A549 (cell line): ENCODE measurements at regions of chr7 and their contacts with region 1.

Region 1: DNA sequence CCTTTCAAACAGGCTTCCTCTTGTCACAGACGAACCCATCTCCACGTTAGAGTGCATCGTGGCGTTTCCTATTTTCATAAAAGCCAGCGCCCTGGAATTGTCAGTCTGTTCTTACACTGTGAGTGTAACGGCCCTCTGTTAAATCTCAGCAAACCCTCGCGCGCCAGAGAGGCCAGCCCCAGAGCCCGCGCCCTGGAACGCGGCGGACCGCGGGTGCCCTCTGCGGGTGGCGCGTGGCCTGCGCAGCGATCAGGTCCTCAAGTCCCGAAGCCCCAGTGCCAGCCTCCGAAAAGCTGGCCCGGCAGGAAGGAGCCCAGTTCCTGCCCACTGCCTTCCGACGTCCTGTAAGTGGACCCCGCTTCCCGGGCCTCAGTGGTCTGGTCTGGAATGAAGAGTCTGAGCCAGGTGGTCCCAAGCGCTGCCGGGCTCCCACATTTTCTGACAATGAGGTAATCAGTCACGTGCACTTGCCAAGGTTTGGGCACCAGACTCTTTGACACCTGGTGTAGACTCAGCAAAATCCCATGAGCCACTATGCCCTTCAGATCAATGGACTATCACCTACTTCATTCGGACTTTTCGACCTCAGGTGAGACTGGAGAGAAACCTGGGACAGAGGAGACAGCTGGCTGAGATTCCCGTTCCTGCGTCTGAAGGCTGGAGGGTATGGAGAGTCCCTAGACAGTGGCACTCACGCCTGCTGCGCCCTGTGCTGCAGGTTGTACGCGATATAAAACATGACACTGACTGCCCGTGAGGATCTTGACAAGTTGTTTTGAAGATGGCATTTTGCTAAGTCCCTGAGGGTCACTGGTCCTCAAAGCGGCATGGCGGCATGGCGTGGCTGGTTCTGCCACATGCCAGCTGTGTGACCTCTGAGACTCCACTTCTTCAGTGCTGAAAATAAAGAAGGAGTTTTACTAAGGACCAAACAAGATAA is 109.4 kb upstream of the LANCL2 start:
- DNase-seq: peak; percentile 71 to 85
- ATAC-seq: peak; percentile 89 to 91
- H3K4me3 ChIP-seq: peak overlapping the region; percentile 69
- H3K27ac ChIP-seq: peak overlapping the region; percentile 91 to 95
- H3K4me1 ChIP-seq: peaks cover 4% of the 10 kb centered on the region; the same call in 1 of the 3 replicates
- CTCF ChIP-seq: peak; percentile 82
- EP300 ChIP-seq: no peak
- POLR2A ChIP-seq: no peak
- RAD21 ChIP-seq: peak; percentile 91 to 94

Region 2: DNA sequence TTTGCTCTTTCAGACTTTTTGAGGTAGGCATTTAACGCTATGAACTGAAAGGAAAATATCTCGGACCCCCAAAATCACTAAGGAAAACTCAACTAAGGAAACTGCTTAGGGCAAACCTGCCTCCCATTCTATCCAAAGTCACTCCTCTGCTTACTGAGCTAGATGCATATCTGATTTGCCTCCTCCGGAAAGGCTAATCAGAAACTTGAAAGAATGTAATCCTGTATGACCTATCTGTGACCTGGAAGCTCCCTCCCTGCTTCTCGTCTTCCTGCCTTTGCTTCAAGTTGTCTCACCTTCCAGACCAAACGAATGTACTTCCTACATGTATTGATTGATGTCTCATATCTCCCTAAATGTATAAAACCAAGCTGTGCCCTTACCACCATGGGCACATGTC is 438.7 kb before region 1 on chr7:
- CTCF ChIA-PET with region 1: interaction called, 11 read pairs
- POLR2A ChIA-PET with region 1: no interaction called
- DNase-seq: no peak
- ATAC-seq: no peak
- H3K4me3 ChIP-seq: no peak overlapping the region
- H3K27ac ChIP-seq: peak overlapping the region in 1 of 2 experiments; percentile 17; a peak in 1 of 6 replicates
- H3K4me1 ChIP-seq: peaks cover 26% of the 10 kb centered on the region
- CTCF ChIP-seq: no peak
- EP300 ChIP-seq: no peak
- POLR2A ChIP-seq: no peak
- RAD21 ChIP-seq: no peak

Region 3: GRCh38 chr7:55026866-55027490 is 228.8 kb before region 1 on chr7:
- CTCF ChIA-PET with region 1: interaction called, 19 read pairs
- POLR2A ChIA-PET with region 1: no interaction called
- DNase-seq: no peak
- ATAC-seq: peak; percentile 28 to 44; a peak in 3 of 6 replicates
- H3K4me3 ChIP-seq: no peak overlapping the region
- H3K27ac ChIP-seq: peak overlapping the region; percentile 29 to 72; a peak in 4 of 6 replicates
- H3K4me1 ChIP-seq: peaks cover 100% of the 10 kb centered on the region
- CTCF ChIP-seq: no peak
- EP300 ChIP-seq: no peak
- POLR2A ChIP-seq: no peak
- RAD21 ChIP-seq: no peak

Region 4: GRCh38 chr7:55132890-55133551 is 122.7 kb before region 1 on chr7:
- CTCF ChIA-PET with region 1: interaction called, 20 read pairs
- POLR2A ChIA-PET with region 1: no interaction called
- DNase-seq: peak; percentile 88 to 91
- ATAC-seq: peak; percentile 83
- H3K4me3 ChIP-seq: peak overlapping the region; percentile 7; the same call in 1 of the 3 replicates
- H3K27ac ChIP-seq: peak overlapping the region; percentile 93 to 98
- H3K4me1 ChIP-seq: peaks cover 71% of the 10 kb centered on the region
- CTCF ChIP-seq: no peak
- EP300 ChIP-seq: peak; percentile 64 to 67; a peak in 2 of 5 replicates
- POLR2A ChIP-seq: no peak
- RAD21 ChIP-seq: peak; percentile 25 to 38; a peak in 4 of 5 replicates

Region 5: GRCh38 chr7:55192718-55193117 is 63.0 kb before region 1 on chr7:
- CTCF ChIA-PET with region 1: interaction called, 44 read pairs
- POLR2A ChIA-PET with region 1: no interaction called
- DNase-seq: no peak
- ATAC-seq: peak in 1 of 2 experiments; percentile 24; a peak in 3 of 6 replicates
- H3K4me3 ChIP-seq: no peak overlapping the region
- H3K27ac ChIP-seq: peak overlapping the region in 1 of 2 experiments; percentile 56; a peak in 2 of 6 replicates
- H3K4me1 ChIP-seq: peaks cover 17% of the 10 kb centered on the region
- CTCF ChIP-seq: no peak
- EP300 ChIP-seq: no peak
- POLR2A ChIP-seq: no peak
- RAD21 ChIP-seq: no peak

Region 6: GRCh38 chr7:55271069-55271626 is 15.4 kb after region 1 on chr7:
- CTCF ChIA-PET with region 1: interaction called, 89 read pairs
- POLR2A ChIA-PET with region 1: no interaction called
- DNase-seq: peak in 1 of 2 experiments; percentile 16
- ATAC-seq: peak in 1 of 2 experiments; percentile 63; a peak in 3 of 6 replicates
- H3K4me3 ChIP-seq: no peak overlapping the region
- H3K27ac ChIP-seq: no peak overlapping the region
- H3K4me1 ChIP-seq: peaks cover 3% of the 10 kb centered on the region; the same call in 1 of the 3 replicates
- CTCF ChIP-seq: peak; percentile 36
- EP300 ChIP-seq: no peak
- POLR2A ChIP-seq: no peak
- RAD21 ChIP-seq: peak; percentile 35 to 68; a peak in 4 of 5 replicates